Posterior cingulate gyrus (tissue), 11 donors: ENCODE measurements at regions of chr17 and their contacts with region 1.

Region 1: DNA sequence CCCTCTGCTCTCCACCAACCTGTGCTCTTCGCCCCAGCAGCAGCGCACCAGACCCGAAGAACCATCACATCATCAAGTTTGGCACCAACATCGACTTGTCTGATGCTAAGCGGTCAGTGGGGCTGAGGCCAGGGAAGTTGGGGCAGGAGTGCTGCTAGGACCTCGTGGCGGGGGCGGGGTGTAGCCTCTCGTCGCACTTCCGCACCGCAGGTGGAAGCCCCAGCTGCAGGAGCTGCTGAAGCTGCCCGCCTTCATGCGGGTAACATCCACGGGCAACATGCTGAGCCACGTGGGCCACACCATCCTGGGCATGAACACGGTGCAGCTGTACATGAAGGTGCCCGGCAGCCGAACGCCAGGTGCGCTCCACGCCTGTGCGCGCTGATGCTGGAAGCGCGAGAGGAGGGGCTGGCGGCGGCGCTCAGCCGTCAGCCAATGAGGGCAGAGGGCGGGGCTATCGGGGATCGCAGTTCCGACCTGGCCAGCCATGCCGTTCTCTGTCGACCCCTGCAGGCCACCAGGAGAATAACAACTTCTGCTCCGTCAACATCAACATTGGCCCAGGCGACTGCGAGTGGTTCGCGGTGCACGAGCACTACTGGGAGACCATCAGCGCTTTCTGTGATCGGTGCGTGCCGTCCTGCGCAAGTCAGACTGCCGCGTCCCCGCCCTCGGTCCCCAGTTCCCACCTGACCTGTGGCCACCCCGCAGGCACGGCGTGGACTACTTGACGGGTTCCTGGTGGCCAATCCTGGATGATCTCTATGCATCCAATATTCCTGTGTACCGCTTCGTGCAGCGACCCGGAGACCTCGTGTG is 3.2 kb upstream of the TMEM88 start:
- DNase-seq: peak; percentile 84 to 99 (median 92)

Region 2: GRCh38 chr17:7740481-7741001 is 111.1 kb before region 1 on chr17:
- intact Hi-C with region 1: loop called (anchors 2 kb)
- DNase-seq: peak in 1 of 10 donors; percentile 85

Region 3: DNA sequence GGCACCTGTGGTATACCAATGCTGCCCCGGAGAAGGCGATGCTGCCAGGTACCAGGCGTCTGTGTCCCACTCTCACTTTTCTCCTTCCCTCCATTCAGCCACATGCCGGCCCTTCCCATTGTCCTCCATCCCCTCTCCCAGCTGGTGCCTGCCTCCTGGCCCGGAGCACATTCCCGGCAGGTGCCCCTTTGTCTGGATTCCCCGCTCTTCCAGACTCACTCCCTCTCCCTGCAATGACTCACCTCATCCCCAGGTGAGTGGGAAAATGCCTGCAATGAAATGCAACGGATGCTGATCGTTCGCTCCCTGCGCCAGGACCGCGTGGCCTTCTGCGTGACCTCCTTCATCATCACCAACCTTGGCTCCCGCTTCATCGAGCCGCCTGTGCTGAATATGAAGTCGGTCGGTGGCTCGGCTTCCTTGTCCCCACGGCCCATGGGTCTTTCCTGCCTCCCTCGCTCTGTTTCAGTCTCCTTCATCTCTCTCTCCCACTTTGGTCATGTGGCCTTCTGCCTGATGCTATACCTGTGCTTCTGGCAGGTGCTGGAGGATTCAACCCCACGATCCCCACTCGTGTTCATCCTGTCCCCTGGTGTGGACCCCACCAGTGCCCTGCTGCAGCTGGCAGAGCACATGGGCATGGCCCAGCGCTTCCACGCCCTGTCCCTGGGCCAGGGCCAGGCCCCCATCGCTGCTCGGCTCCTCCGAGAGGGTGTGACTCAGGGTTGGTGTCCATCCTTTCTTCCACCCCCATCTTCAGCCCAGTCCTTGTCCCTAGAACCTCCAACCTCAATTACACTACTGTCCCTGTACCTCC is 27.9 kb before region 1 on chr17:
- intact Hi-C with region 1: loop called (anchors 1 kb)
- DNase-seq: peak in 3 of 10 donors; percentile 30 to 71 (median 50)

Region 4: GRCh38 chr17:7834962-7835813 is 16.5 kb before region 1 on chr17:
- intact Hi-C with region 1: loop called (anchors 2 kb)
- DNase-seq: peak; percentile 95 to 99 (median 97)